IMR-90 (cell line): ENCODE measurements at regions of chr2 and their contacts with region 1.

Region 1: DNA sequence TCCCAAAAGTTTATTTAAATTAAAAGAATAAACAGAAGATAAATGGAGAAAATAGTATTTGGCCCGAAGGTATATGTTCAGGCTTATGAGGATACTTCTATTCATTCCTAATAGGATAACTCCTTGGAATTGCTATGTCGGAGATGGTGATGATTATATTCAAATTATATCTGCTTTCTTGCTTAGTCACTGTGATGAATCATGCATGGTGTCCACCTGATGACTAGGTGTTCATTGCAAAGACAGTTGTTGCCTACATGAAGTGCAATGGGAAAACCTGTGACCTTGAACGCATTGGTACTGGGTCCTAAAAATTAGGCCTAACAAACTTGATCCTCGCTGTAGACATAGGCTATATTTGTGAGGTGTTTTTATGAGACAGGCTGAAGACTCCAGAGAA is 617.3 kb upstream of the ZEB2 start:
- DNase-seq: no peak
- ATAC-seq: no peak
- H3K4me3 ChIP-seq: no peak overlapping the region
- H3K27ac ChIP-seq: no peak overlapping the region
- H3K4me1 ChIP-seq: no peaks in the 10 kb centered on the region
- H3K27me3 ChIP-seq: no peaks in the 10 kb centered on the region
- CTCF ChIP-seq: no peak
- POLR2A ChIP-seq: no peak
- RAD21 ChIP-seq: no peak

Region 2: GRCh38 chr2:145110668-145111356 is 26.4 kb before region 1 on chr2:
- CTCF ChIA-PET with region 1: no interaction called
- POLR2A ChIA-PET with region 1: no interaction called
- dilution Hi-C with region 1: no loop called
- in situ Hi-C with region 1: no loop called
- intact Hi-C with region 1: no loop called
- DNase-seq: peak; percentile 50
- ATAC-seq: peak; percentile 72
- H3K4me3 ChIP-seq: no peak overlapping the region
- H3K27ac ChIP-seq: no peak overlapping the region
- H3K4me1 ChIP-seq: peaks cover 7% of the 10 kb centered on the region; the same call in 1 of the 2 replicates
- H3K27me3 ChIP-seq: no peaks in the 10 kb centered on the region
- CTCF ChIP-seq: no peak
- POLR2A ChIP-seq: no peak
- RAD21 ChIP-seq: no peak

Region 3: GRCh38 chr2:145123606-145124005 is 13.6 kb before region 1 on chr2:
- CTCF ChIA-PET with region 1: no interaction called
- POLR2A ChIA-PET with region 1: no interaction called
- dilution Hi-C with region 1: no loop called
- in situ Hi-C with region 1: no loop called
- intact Hi-C with region 1: loop called (anchors 2 kb)
- DNase-seq: peak; percentile 33
- ATAC-seq: no peak; the same call in 1 of the 2 replicates
- H3K4me3 ChIP-seq: no peak overlapping the region
- H3K27ac ChIP-seq: no peak overlapping the region
- H3K4me1 ChIP-seq: no peaks in the 10 kb centered on the region
- H3K27me3 ChIP-seq: no peaks in the 10 kb centered on the region
- CTCF ChIP-seq: no peak
- POLR2A ChIP-seq: no peak
- RAD21 ChIP-seq: no peak